Dendritic cell treated with granulocyte-macrophage colony-stimulating factor and Interleukin-4, amounts not matched to agents 40 ng/mL and 50 ng/mL, for 4 days (primary cell): ENCODE measurements at regions of chr22 and their contacts with region 1.

Region 1: GRCh38 chr22:37817705-37818408 is 5.3 kb upstream of the GALR3 start:
- H3K4me3 Mint-ChIP-seq: peak overlapping the region; percentile 55
- H3K27ac Mint-ChIP-seq: no peak overlapping the region
- H3K4me1 Mint-ChIP-seq: peaks cover 25% of the 10 kb centered on the region
- H3K27me3 Mint-ChIP-seq: peaks cover 39% of the 10 kb centered on the region

Region 2: DNA sequence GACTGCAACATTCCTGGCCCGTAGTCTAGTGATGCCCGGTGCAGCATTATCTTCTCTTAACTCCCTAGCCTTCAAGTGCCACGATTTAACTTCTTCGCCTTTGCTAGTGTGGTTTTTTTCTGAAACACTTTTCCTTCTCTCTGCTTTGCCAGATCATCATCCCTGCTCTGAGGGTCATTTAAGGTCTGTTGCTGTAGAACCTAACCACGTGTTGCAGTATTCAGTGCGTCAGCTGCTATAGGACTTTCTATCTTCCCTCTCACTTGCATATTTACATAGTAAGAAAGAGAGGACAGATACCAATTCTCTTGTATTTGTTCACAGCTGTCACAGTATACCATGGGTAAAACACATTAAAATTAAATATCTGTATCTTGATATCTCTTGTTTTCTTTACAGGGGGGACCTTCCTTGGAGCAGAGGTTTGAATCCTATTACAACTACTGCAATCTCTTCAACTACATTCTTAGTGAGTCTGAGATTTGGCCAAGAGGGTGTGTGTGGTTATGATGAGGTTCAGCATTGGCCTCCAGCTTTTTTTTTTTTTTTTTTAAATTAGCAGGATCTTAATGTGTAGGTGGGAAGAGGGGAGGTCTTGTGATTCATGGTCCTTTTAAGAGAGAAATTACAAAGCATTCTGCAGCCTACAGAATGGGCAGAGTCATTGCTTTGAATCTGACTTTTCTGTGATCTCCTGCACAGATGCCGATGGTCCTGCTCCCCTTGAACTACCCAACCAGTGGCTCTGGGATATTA is 44.9 kb after region 1 on chr22:
- intact Hi-C with region 1: loop called (anchors 1 kb)
- H3K4me3 Mint-ChIP-seq: no peak overlapping the region
- H3K27ac Mint-ChIP-seq: no peak overlapping the region
- H3K4me1 Mint-ChIP-seq: no peaks in the 10 kb centered on the region
- H3K27me3 Mint-ChIP-seq: no peaks in the 10 kb centered on the region

Region 3: DNA sequence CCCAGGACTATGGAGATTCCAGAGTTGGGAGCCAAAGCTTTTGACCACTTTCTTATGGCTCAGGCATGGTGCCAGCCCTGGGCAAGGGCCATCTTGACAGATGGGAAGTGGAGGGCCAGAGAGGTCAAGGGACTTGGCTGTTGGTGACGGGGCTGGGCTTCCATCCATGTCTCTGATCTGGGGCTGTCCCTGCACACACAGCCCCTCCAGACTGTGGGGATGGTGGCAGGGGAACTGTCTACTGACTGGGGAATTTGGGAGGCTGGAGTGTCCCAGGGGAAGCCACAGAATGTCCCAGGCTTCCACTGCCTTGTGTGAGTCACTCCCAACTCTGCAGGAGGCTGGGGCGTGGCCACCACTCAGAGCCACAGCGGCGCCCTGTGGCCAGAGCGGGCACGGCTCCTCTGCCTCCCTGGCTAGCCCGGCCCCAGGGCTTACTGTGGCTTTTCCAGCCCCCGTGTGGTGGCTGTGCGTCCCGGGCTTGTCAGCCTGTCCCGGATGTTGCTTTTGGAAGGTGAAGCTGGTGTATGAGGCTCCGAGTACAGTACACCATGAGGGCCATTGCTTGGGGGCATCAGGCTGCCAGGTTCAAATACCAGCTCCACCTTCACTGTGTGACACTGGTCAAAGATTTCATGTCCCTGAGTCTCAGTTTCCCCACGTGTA is 116.0 kb after region 1 on chr22:
- intact Hi-C with region 1: loop called (anchors 1 kb)
- H3K4me3 Mint-ChIP-seq: no peak overlapping the region
- H3K27ac Mint-ChIP-seq: no peak overlapping the region
- H3K4me1 Mint-ChIP-seq: peaks cover 16% of the 10 kb centered on the region
- H3K27me3 Mint-ChIP-seq: no peaks in the 10 kb centered on the region

Region 4: GRCh38 chr22:37961062-37961461 is 143.2 kb after region 1 on chr22:
- intact Hi-C with region 1: loop called (anchors 5 kb)
- H3K4me3 Mint-ChIP-seq: no peak overlapping the region
- H3K27ac Mint-ChIP-seq: no peak overlapping the region
- H3K4me1 Mint-ChIP-seq: no peaks in the 10 kb centered on the region
- H3K27me3 Mint-ChIP-seq: no peaks in the 10 kb centered on the region